ENCODE measurements at regions of chr11 and their contacts with region 1.

Region 1: GRCh38 chr11:66311965-66312548 is 4.8 kb downstream of the CD248 start:
- DNase-seq: peak; percentile 89
- ATAC-seq: peak; percentile 51
- H3K4me3 ChIP-seq: peak overlapping the region; percentile 63
- H3K27ac ChIP-seq: peak overlapping the region; percentile 48
- H3K4me1 ChIP-seq: peaks cover 14% of the 10 kb centered on the region
- H3K27me3 ChIP-seq: peaks cover 4% of the 10 kb centered on the region
- CTCF ChIP-seq: peak; percentile 97
- POLR2A ChIP-seq: peak; percentile 46
- RAD21 ChIP-seq: peak; percentile 97

Region 2: GRCh38 chr11:66288671-66289547 is 23.1 kb before region 1 on chr11 and contains the start of gene YIF1A:
- CTCF ChIA-PET with region 1: no interaction called
- POLR2A ChIA-PET with region 1: interaction called, 16 read pairs
- dilution Hi-C with region 1: no loop called
- in situ Hi-C with region 1: no loop called
- intact Hi-C with region 1: no loop called
- DNase-seq: peak; percentile 100
- ATAC-seq: peak; percentile 95
- H3K4me3 ChIP-seq: peak within 1 kb of the TSS; percentile 69
- H3K27ac ChIP-seq: peak within 1 kb of the TSS; percentile 86
- H3K4me1 ChIP-seq: peaks cover 11% of the 10 kb centered on the region
- H3K27me3 ChIP-seq: peaks cover 29% of the 10 kb centered on the region
- CTCF ChIP-seq: no peak
- POLR2A ChIP-seq: peak; percentile 97
- RAD21 ChIP-seq: no peak
- total RNA-seq, gene YIF1A: 128 and 134 TPM in 2 replicates

Region 3: GRCh38 chr11:66328307-66329144 is 16.5 kb after region 1 on chr11:
- CTCF ChIA-PET with region 1: interaction called, 6 read pairs
- POLR2A ChIA-PET with region 1: interaction called, 18 read pairs
- dilution Hi-C with region 1: no loop called
- in situ Hi-C with region 1: no loop called
- intact Hi-C with region 1: loop called (anchors 1 kb)
- DNase-seq: peak; percentile 70
- ATAC-seq: peak; percentile 73
- H3K4me3 ChIP-seq: no peak overlapping the region
- H3K27ac ChIP-seq: peak overlapping the region; percentile 95
- H3K4me1 ChIP-seq: peaks cover 43% of the 10 kb centered on the region
- H3K27me3 ChIP-seq: no peaks in the 10 kb centered on the region
- CTCF ChIP-seq: peak; percentile 92
- POLR2A ChIP-seq: peak; percentile 40
- RAD21 ChIP-seq: peak; percentile 84

Region 4: GRCh38 chr11:66336234-66337102 is 24.4 kb after region 1 on chr11 and contains the start of gene RIN1:
- CTCF ChIA-PET with region 1: interaction called, 17 read pairs
- POLR2A ChIA-PET with region 1: interaction called, 23 read pairs
- dilution Hi-C with region 1: no loop called
- in situ Hi-C with region 1: no loop called
- intact Hi-C with region 1: loop called (anchors 1 kb)
- DNase-seq: peak; percentile 99
- ATAC-seq: peak; percentile 86
- H3K4me3 ChIP-seq: peak within 1 kb of the TSS; percentile 60
- H3K27ac ChIP-seq: peak within 1 kb of the TSS; percentile 89
- H3K4me1 ChIP-seq: peaks cover 23% of the 10 kb centered on the region
- H3K27me3 ChIP-seq: no peaks in the 10 kb centered on the region
- CTCF ChIP-seq: peak; percentile 47
- POLR2A ChIP-seq: peak; percentile 97
- RAD21 ChIP-seq: peak; percentile 29; the same call in 1 of the 2 replicates
- total RNA-seq, gene RIN1: 9.9 and 10.6 TPM in 2 replicates

Region 5: GRCh38 chr11:66373261-66373660 is 61.2 kb after region 1 on chr11:
- CTCF ChIA-PET with region 1: no interaction called
- POLR2A ChIA-PET with region 1: no interaction called
- dilution Hi-C with region 1: no loop called
- in situ Hi-C with region 1: no loop called
- intact Hi-C with region 1: no loop called
- DNase-seq: no peak
- ATAC-seq: no peak
- H3K4me3 ChIP-seq: no peak overlapping the region
- H3K27ac ChIP-seq: no peak overlapping the region
- H3K4me1 ChIP-seq: peaks cover 7% of the 10 kb centered on the region
- H3K27me3 ChIP-seq: peaks cover 16% of the 10 kb centered on the region
- CTCF ChIP-seq: no peak
- POLR2A ChIP-seq: no peak
- RAD21 ChIP-seq: no peak

Region 6: DNA sequence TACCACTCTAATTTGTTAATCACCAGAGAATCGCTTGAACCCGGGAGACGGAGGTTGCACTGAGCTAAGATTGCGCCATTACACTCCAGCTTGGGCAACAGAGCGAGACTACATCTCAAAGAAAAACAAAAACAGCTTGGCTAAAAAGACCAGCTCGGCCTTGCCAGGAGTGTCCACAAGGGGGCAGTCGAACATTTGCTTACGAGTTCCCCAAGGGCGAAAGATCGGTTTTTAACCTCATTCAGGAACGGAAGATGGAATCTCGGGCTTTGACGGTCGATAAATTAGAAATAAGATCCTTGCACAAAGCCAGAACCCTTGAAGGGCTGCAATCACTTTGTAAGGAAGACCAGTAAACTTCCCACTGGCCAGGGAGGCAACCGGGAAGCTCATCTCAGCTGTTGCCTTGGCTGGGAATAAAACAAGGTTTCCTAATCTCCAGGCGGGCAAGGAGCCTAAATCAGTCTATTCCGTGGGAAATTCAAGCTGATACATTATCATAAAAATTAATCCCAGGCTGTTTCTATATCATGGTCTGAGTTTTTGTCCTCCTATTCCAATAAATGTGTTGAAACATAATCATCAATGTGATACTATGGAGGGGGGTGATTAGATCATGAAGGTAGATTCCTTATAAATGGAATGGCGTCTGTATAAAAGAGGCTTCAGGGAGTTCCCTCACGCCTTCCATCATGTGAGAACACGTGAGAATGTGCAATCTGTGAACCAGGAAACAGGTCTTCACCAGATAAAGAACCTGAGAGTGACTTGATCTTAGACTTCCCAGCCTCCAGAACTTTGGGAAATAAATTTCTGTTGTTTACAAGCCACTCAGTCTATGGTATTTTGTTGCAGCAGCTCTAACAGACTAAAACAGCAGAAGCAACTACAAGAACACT is 74.4 kb after region 1 on chr11:
- CTCF ChIA-PET with region 1: interaction called, 9 read pairs
- POLR2A ChIA-PET with region 1: interaction called, 5 read pairs
- dilution Hi-C with region 1: no loop called
- in situ Hi-C with region 1: loop called (anchors 5 kb)
- intact Hi-C with region 1: loop called (anchors 1 kb)
- DNase-seq: peak; percentile 80
- ATAC-seq: peak; percentile 90
- H3K4me3 ChIP-seq: peak overlapping the region; percentile 23; the same call in 1 of the 2 replicates
- H3K27ac ChIP-seq: no peak overlapping the region
- H3K4me1 ChIP-seq: no peaks in the 10 kb centered on the region
- H3K27me3 ChIP-seq: peaks cover 7% of the 10 kb centered on the region
- CTCF ChIP-seq: peak; percentile 90
- POLR2A ChIP-seq: no peak
- RAD21 ChIP-seq: peak; percentile 67

Region 7: GRCh38 chr11:67230406-67230805 is 918.3 kb after region 1 on chr11:
- CTCF ChIA-PET with region 1: no interaction called
- POLR2A ChIA-PET with region 1: no interaction called
- dilution Hi-C with region 1: no loop called
- in situ Hi-C with region 1: no loop called
- intact Hi-C with region 1: no loop called
- DNase-seq: no peak
- ATAC-seq: no peak
- H3K4me3 ChIP-seq: no peak overlapping the region
- H3K27ac ChIP-seq: no peak overlapping the region
- H3K4me1 ChIP-seq: no peaks in the 10 kb centered on the region
- H3K27me3 ChIP-seq: no peaks in the 10 kb centered on the region
- CTCF ChIP-seq: no peak
- POLR2A ChIP-seq: no peak
- RAD21 ChIP-seq: no peak